H1 (cell line): ENCODE measurements at regions of chr7 and their contacts with region 1.

Region 1: DNA sequence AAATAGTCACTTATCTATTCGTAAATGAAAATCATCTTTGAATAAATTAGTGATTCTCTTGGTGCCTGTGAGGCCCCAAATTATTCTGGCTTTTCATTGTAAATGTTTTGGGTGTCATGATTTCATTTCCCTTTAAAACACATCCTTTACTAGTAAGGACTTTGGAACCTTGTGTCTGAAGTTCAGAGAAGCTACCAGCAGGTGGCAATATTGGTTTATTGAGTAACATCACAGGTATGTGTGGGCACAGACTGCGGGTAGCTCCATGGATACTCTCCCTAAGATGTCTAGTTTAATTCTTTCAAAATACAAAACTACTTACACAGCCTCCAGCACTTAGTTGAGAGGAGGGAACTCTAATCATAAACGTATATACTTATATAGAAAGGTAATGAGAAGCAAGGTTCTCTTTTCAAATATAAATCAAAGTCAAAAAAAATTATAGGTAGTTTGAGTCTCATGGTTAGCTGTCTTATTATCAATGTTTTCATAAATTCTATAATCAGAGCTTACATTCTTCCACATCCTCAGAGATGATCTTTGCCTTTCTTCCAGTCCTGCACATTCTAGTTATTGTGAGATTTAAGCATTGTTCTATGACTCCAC is 449.6 kb downstream of the GRM8 start:
- DNase-seq: peak; percentile 5 to 61
- H3K4me3 ChIP-seq: no peak overlapping the region
- H3K27ac ChIP-seq: no peak overlapping the region
- H3K4me1 ChIP-seq: peaks cover 0 to 6% (median 0%) of the 10 kb centered on the region in 4 experiments; a peak in 1 of 7 replicates
- H3K27me3 ChIP-seq: no peaks in the 10 kb centered on the region
- CTCF ChIP-seq: peak in 2 of 3 experiments; percentile 65 to 78; a peak in 3 of 4 replicates
- EP300 ChIP-seq: no peak
- POLR2A ChIP-seq: no peak
- RAD21 ChIP-seq: peak; percentile 91 to 94

Region 2: DNA sequence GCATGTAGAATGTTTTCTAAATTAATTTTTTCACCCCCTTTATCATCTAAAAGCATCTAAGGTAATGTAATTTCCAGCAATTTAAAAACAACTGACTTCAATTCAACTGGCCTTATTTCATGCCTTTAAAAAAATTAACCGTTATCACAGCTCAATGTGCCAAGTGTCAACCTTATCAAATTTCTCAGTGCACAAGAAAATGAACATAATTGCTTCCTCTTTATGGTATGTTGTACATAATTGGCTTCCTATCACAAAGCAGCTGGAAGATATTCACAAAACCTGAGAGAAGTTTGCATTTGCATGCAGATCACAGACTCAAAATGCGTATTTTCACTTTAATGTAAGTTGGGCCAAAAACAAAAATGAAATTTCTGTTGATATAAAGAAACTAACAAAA is 516.8 kb before region 1 on chr7:
- CTCF ChIA-PET with region 1: no interaction called
- POLR2A ChIA-PET with region 1: no interaction called
- DNase-seq: no peak
- H3K4me3 ChIP-seq: no peak overlapping the region
- H3K27ac ChIP-seq: no peak overlapping the region
- H3K4me1 ChIP-seq: no peaks in the 10 kb centered on the region
- H3K27me3 ChIP-seq: no peaks in the 10 kb centered on the region
- CTCF ChIP-seq: no peak
- EP300 ChIP-seq: no peak
- POLR2A ChIP-seq: no peak
- RAD21 ChIP-seq: no peak

Region 3: GRCh38 chr7:126856691-126857291 is 53.6 kb after region 1 on chr7:
- CTCF ChIA-PET with region 1: interaction called, 16 read pairs
- POLR2A ChIA-PET with region 1: no interaction called
- DNase-seq: no peak
- H3K4me3 ChIP-seq: no peak overlapping the region
- H3K27ac ChIP-seq: no peak overlapping the region
- H3K4me1 ChIP-seq: no peaks in the 10 kb centered on the region; a peak in 1 of 7 replicates
- H3K27me3 ChIP-seq: no peaks in the 10 kb centered on the region
- CTCF ChIP-seq: peak in 2 of 3 experiments; percentile 45 to 76; a peak in 2 of 4 replicates
- EP300 ChIP-seq: no peak
- POLR2A ChIP-seq: no peak
- RAD21 ChIP-seq: peak; percentile 28 to 51; a peak in 3 of 4 replicates

Region 4: DNA sequence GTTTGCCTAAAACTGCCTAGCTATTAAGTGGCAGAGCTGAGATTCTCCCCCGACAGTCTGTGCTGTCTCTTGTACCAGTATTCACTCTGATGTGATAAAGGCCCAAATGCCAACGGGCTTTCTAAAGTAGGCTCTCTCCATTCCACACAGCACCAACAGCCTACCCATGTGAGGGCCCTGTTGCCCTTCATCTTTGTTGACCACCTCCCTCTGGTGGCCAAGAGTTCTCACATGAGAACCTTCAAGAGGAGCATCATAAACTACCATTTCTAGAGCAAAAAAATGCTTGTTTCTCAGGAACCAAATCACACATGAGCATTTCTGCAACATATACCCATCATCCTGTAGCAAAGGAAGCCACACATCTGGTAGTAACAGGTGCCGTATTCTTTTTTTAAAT is 263.8 kb after region 1 on chr7:
- CTCF ChIA-PET with region 1: interaction called, 23 read pairs
- POLR2A ChIA-PET with region 1: no interaction called
- DNase-seq: no peak
- H3K4me3 ChIP-seq: no peak overlapping the region
- H3K27ac ChIP-seq: no peak overlapping the region
- H3K4me1 ChIP-seq: no peaks in the 10 kb centered on the region
- H3K27me3 ChIP-seq: no peaks in the 10 kb centered on the region
- CTCF ChIP-seq: peak; percentile 30 to 58 (median 53)
- EP300 ChIP-seq: no peak
- POLR2A ChIP-seq: no peak
- RAD21 ChIP-seq: peak; percentile 66 to 73

Region 5: GRCh38 chr7:127146746-127147536 is 343.8 kb after region 1 on chr7:
- CTCF ChIA-PET with region 1: interaction called, 10 read pairs
- POLR2A ChIA-PET with region 1: no interaction called
- DNase-seq: no peak
- H3K4me3 ChIP-seq: no peak overlapping the region
- H3K27ac ChIP-seq: no peak overlapping the region
- H3K4me1 ChIP-seq: no peaks in the 10 kb centered on the region
- H3K27me3 ChIP-seq: no peaks in the 10 kb centered on the region
- CTCF ChIP-seq: no peak
- EP300 ChIP-seq: no peak
- POLR2A ChIP-seq: no peak
- RAD21 ChIP-seq: no peak